Activated CD4-positive, alpha-beta T cell treated with anti-CD3 and anti-CD28 coated beads, Interleukin-2, amount 10 ng/mL, durations not matched to agents 24 days and 14 days (primary cell): ENCODE measurements at regions of chr14 and their contacts with region 1.

Region 1: GRCh38 chr14:87944987-87945604 is 47.9 kb downstream of the GALC start:
- DNase-seq: peak; percentile 61
- H3K4me3 Mint-ChIP-seq: no peak overlapping the region
- H3K27ac Mint-ChIP-seq: no peak overlapping the region
- H3K4me1 Mint-ChIP-seq: no peaks in the 10 kb centered on the region
- H3K27me3 Mint-ChIP-seq: no peaks in the 10 kb centered on the region

Region 2: GRCh38 chr14:87992718-87993628 is 47.9 kb after region 1 on chr14 and contains the start of gene GALC:
- intact Hi-C with region 1: loop called (anchors 2 kb)
- DNase-seq: peak; percentile 98
- H3K4me3 Mint-ChIP-seq: peak within 1 kb of the TSS; percentile 88
- H3K27ac Mint-ChIP-seq: peak within 1 kb of the TSS; percentile 94
- H3K4me1 Mint-ChIP-seq: peaks cover 55% of the 10 kb centered on the region
- H3K27me3 Mint-ChIP-seq: no peaks in the 10 kb centered on the region
- total RNA-seq, gene GALC: 7.3 and 9.3 TPM in 2 replicates

Region 3: DNA sequence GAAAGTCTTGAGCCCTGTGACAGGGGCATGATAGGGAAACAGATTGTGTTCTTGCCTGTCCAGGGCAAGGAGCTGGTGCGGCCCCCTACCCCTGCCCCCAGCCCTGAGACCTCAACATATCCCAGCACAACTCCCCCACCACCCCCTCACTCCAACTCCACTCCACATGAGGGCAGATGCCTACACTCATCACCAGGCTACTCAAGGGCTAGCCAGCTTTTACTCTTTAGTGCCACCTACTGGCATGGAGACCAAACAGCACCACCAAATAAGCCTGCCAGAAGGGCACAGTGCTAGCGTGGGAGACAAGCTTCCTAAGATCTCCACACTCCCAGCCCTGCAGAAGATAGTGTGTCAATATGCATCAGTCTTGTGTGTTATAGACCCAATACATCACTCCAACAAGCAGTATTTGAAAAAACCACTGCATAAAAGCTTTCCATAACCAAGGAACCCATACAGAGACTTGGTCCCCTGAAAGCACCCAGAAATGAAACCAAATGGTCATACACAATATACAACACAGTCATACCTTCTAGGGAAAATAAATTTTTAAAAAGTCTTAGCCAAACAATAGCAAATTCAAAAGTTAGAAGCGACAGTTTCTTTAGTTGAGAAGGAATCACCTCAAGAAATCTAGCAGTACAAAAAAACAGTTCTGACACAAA is 223.5 kb after region 1 on chr14:
- intact Hi-C with region 1: loop called (anchors 1 kb)
- DNase-seq: peak; percentile 87
- H3K4me3 Mint-ChIP-seq: peak overlapping the region; percentile 26
- H3K27ac Mint-ChIP-seq: no peak overlapping the region
- H3K4me1 Mint-ChIP-seq: peaks cover 6% of the 10 kb centered on the region
- H3K27me3 Mint-ChIP-seq: peaks cover 40% of the 10 kb centered on the region

Region 4: DNA sequence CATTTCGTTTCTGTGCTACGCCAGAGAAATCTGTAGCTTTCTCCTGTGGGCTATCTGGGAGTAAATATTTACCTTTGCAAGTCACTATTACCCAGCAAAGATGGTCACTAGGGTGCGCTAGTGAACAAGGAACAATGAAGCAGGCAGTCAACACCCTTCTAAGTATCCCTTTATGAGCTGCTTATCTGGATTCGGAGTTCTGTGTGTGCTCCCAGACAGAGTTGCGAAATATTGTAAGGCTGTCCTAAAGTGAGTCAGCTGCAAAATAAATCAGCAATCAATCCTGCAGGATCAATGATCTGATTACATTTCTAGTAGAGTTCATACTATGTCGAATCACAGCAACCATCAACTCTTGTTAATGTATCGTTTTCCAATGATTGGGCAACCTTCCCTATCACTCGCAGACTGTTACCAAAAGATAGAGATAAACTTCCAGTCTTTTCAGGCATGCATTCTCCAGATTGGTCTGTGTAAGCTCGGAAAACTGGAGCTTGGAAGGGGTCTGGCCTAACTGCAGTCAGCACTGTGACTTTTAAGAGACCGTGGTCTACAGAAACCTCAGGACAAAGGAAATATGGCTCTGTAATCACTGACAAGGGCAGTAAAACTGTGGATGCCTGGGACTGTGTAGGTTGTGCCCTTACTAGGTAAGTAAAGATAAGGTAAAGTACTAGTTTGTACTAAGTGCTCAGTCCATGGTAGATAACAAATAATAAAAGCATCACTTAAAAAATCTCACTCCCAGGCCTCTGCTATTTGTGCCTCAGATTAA is 244.5 kb after region 1 on chr14:
- intact Hi-C with region 1: loop called (anchors 5 kb)
- DNase-seq: peak; percentile 87
- H3K4me3 Mint-ChIP-seq: no peak overlapping the region
- H3K27ac Mint-ChIP-seq: no peak overlapping the region
- H3K4me1 Mint-ChIP-seq: peaks cover 5% of the 10 kb centered on the region
- H3K27me3 Mint-ChIP-seq: peaks cover 11% of the 10 kb centered on the region

Region 5: DNA sequence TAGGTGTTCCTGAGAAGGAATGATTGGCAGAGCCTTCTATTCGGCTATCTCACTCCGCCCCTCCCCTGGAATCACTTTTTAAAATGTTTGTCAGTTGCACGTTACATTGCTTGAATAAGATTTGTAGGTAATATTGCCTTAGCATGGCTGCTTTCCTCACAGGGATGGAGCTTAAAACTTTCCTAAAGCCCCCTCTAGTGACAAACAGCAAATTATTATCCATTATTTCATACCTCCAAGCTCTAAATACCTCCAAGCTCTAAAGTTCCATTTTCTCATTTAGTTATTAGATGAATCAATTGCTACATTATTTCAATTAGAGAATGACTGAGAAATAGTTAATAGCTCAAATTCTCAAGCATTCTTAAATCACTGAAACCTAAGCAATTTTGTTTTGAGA is 435.3 kb after region 1 on chr14:
- intact Hi-C with region 1: loop called (anchors 5 kb)
- DNase-seq: no peak
- H3K4me3 Mint-ChIP-seq: no peak overlapping the region
- H3K27ac Mint-ChIP-seq: no peak overlapping the region
- H3K4me1 Mint-ChIP-seq: peaks cover 11% of the 10 kb centered on the region
- H3K27me3 Mint-ChIP-seq: peaks cover 28% of the 10 kb centered on the region

Region 6: DNA sequence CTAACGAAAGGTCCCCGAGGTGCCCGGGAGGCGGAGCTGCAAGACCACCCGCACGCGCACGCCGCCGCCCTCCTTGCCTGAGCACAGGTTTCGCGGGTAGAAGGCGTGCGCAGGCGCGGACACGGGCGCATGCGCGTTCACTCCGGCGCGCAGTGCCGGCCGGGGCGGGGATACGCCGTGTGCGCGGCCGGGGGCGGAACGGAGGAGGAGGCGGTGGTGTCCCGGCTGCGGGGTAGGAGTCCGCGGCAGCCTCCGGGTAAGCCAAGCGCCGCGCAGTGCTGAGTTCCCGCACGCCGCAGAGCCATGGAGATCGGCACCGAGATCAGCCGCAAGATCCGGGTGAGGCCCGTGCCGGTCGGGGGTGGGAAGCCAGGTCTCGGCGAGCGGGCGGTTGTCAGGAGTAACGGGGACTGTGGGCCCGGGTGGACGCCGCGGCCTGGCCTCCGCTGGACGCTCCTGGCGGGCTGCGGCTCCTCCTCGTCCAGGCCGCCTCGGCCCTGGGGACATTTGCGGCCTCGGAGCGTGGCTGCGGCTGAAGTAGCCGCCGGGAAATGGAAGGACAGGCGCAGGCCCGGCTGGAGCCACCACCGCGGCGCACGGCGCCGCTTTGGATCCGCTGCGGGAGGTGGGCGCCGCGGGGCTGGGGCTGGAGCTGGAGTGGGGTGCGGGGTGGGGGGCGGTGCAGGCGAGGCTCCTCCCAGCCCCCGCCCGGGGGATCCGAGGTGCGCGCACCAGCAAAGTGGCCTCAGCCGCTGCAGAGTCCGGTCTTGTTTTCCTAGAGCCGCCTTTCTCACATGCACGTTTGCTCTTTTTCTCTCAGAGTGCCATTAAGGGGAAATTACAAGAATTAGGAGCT is 618.0 kb after region 1 on chr14 and contains the start of gene ZC3H14:
- intact Hi-C with region 1: loop called (anchors 10 kb)
- DNase-seq: peak; percentile 97
- H3K4me3 Mint-ChIP-seq: peak within 1 kb of the TSS; percentile 94
- H3K27ac Mint-ChIP-seq: peak within 1 kb of the TSS; percentile 95
- H3K4me1 Mint-ChIP-seq: peaks cover 23% of the 10 kb centered on the region
- H3K27me3 Mint-ChIP-seq: peaks cover 27% of the 10 kb centered on the region
- total RNA-seq, gene ZC3H14: 59.2 and 64.7 TPM in 2 replicates